Activated B cell treated with CpG ODN at 0.5 μM for 24 hours (primary cell): ENCODE measurements at regions of chr1 and their contacts with region 1.

Region 1: DNA sequence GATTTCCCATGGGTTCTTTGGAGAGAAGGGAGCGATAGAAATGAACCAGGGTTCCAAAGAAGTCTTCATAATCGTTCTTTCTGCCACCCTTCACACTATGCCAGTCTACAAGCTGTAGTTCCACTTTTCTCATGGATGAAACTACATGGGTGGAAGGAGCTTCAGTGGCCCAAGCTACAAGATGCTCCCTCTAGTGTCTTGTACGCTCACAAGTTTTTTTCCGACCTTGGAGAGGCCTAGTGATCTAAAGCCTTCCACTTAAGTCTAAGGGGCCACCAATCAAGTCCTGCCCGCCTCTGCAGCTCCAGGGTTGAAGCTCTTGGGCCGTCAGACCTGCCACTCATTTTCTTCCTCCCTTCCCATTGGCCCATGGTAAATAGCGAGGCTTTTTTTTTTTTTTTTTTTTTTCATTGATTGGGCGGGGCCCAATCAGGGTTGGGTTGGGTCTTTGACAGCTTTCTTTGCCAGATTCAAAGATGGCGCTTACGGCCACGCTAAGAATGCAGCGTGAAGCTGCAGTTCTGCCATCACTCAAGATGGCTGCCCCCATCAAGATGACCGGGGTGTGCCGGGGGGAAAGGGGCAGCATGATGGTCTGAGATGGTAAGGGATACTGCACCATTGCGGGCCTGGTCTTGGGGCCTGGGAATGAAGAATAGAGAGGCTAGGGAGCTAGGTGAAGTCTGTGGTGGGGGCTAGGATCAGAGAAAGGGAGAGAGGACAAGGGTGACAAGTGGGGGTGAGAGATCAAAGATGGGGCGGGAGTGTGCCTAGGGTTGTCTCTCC is at the start of gene TOMM40L:
- DNase-seq: peak; percentile 65
- ATAC-seq: peak; percentile 95
- H3K4me3 Mint-ChIP-seq: peak within 1 kb of the TSS; percentile 99
- H3K27ac Mint-ChIP-seq: peak within 1 kb of the TSS; percentile 93
- H3K4me1 Mint-ChIP-seq: peaks cover 29% of the 10 kb centered on the region
- H3K27me3 Mint-ChIP-seq: peaks cover 25% of the 10 kb centered on the region
- CTCF ChIP-seq: no peak
- total RNA-seq, gene TOMM40L: 11.7 and 12.4 TPM in 2 replicates

Region 2: DNA sequence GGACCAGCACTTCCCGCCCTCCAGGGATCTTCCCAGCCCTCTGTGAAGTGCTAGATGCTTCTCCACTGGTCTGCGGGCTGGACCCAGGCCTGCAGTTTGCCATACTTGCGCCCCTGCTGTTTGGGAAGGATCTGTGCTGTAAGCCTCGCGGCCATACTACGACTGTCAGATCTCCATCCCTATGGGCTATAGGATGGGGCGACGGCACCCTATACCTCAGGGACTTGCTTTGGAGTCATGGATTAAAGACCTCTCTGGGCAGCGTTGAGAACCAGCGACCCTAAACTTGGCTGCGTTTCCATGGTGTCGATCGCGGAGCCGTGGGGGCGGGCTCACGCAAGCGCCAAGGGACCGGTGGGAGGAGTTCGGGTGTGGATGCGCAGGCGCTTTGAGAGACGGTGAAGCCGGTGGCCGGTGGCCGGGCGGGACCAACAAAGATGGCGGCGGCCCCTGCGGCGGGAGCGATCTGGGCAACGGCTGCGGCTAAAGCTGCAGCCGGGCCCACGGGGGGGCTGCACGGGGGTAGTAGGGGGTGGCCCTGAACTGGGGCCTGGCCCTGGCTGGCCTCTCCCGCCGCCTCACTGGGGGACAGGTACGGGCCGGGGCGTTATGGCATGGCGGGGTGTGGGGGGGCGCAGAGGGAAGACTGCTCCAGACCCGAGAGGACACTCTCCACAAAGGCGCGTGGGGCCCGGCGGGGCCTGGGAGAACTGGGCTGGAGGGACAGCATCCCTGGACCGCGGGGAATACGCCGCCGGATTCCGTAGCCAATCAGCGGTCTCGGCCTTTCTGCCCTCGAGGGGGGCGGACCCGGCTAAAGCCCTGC is 66.4 kb before region 1 on chr1 and contains the start of gene USP21:
- CTCF ChIA-PET with region 1: interaction called, 3 read pairs
- POLR2A ChIA-PET with region 1: interaction called, 6 read pairs
- intact Hi-C with region 1: loop called (anchors 1 kb)
- DNase-seq: peak; percentile 93
- ATAC-seq: peak; percentile 95
- H3K4me3 Mint-ChIP-seq: peak within 1 kb of the TSS; percentile 93
- H3K27ac Mint-ChIP-seq: peak within 1 kb of the TSS; percentile 91
- H3K4me1 Mint-ChIP-seq: peaks cover 48% of the 10 kb centered on the region
- H3K27me3 Mint-ChIP-seq: no peaks in the 10 kb centered on the region
- CTCF ChIP-seq: no peak
- total RNA-seq, gene USP21: 31.9 and 38.1 TPM in 2 replicates

Region 3: DNA sequence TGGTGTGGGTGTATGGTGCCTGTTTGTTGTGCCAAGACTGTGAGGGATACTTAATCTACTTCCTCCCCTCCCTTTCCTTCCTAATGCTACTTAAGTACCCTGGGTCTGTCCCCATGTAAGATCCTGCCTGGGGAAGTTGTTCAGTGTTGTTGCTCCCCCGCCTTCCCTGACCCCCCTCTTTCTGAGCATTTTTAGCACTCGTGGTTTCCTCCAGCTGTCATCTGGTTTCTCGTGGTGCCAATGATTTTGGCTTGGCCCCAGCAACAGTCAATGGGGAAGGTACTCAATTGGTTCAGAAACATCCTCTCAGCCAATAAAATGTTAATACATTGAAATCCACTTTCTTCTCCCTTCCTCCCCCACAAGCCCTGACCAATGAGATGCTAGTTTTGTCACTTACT is 40.4 kb before region 1 on chr1:
- CTCF ChIA-PET with region 1: interaction called, 22 read pairs
- POLR2A ChIA-PET with region 1: interaction called, 18 read pairs
- intact Hi-C with region 1: loop called (anchors 2 kb)
- DNase-seq: peak; percentile 41
- ATAC-seq: peak; percentile 66
- H3K4me3 Mint-ChIP-seq: peak overlapping the region; percentile 77
- H3K27ac Mint-ChIP-seq: peak overlapping the region; percentile 93
- H3K4me1 Mint-ChIP-seq: peaks cover 85% of the 10 kb centered on the region
- H3K27me3 Mint-ChIP-seq: no peaks in the 10 kb centered on the region
- CTCF ChIP-seq: no peak

Region 4: DNA sequence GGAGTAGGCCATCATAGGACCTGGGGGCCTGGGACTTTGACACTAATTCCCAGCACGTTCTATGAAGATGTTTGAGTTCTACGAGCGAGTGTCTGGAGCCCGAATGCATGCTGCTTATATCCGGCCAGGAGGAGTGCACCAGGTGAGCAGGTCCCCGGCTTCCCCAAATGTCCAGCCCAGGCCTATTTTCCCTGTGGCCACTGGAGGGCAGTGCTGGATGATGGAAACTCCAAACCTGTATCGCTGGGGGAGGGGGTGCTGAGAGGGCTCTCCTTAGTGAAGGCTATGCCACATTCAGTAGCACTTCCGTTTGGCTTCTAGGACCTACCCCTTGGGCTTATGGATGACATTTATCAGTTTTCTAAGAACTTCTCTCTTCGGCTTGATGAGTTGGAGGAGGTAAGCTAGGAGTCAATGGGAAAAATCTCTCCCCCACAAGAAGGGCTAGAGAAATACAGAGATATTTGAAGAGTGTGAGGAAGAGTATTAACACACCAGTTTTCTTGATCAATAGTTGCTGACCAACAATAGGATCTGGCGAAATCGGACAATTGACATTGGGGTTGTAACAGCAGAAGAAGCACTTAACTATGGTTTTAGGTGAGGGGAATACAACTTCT is 15.8 kb before region 1 on chr1:
- CTCF ChIA-PET with region 1: interaction called, 27 read pairs
- POLR2A ChIA-PET with region 1: interaction called, 4 read pairs
- intact Hi-C with region 1: loop called (anchors 1 kb)
- DNase-seq: peak; percentile 52
- ATAC-seq: peak; percentile 97
- H3K4me3 Mint-ChIP-seq: no peak overlapping the region
- H3K27ac Mint-ChIP-seq: no peak overlapping the region
- H3K4me1 Mint-ChIP-seq: peaks cover 9% of the 10 kb centered on the region
- H3K27me3 Mint-ChIP-seq: no peaks in the 10 kb centered on the region
- CTCF ChIP-seq: no peak

Region 5: GRCh38 chr1:161314201-161314981 is 88.7 kb after region 1 on chr1 and contains the start of gene SDHC:
- CTCF ChIA-PET with region 1: interaction called, 7 read pairs
- POLR2A ChIA-PET with region 1: interaction called, 10 read pairs
- intact Hi-C with region 1: loop called (anchors 1 kb)
- DNase-seq: peak; percentile 83
- ATAC-seq: peak; percentile 97
- H3K4me3 Mint-ChIP-seq: peak within 1 kb of the TSS; percentile 98
- H3K27ac Mint-ChIP-seq: peak within 1 kb of the TSS; percentile 98
- H3K4me1 Mint-ChIP-seq: peaks cover 21% of the 10 kb centered on the region
- H3K27me3 Mint-ChIP-seq: no peaks in the 10 kb centered on the region
- CTCF ChIP-seq: no peak
- total RNA-seq, gene SDHC: 160 and 179 TPM in 2 replicates

Region 6: DNA sequence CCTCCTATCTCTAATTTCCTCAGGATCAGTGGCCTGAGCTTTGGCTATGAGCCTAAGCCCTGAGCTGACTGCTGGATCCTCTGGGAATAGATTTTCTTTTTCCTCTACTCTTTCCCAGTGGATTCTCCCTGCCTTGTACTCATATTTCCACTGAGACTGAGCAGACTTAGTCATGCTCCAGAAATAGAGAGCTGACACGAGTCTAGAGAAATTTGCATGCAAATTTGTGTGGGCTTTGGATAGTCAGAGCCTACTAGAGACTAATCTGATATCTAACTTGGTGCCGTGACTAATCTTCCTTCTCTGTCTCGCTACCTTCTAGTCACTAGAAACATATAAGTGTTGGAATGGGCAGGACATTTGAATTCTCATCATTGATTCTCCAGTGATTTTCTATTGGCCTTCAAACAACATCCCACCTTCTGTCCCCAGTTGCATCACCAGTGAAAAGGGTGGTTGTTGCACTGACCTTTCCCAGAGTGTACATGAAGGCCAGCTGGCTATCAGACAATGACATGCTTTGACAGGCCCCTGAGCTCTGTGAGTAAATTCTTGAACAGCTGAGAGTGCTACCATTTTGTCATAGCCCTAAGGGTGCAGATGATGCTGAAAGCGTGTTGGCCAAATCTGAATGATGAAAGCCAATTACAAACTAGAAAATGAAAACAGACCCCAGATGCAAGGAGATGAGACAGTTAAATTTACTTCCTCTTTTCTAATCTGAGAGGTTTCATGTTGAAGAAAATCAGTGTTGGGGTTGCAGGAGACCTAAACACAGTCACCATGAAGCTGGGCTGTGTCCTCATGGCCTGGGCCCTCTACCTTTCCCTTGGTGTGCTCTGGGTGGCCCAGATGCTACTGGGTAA is 481.0 kb after region 1 on chr1 and contains the start of gene FCRLA:
- CTCF ChIA-PET with region 1: no interaction called
- POLR2A ChIA-PET with region 1: interaction called, 10 read pairs
- intact Hi-C with region 1: no loop called
- DNase-seq: no peak
- ATAC-seq: peak; percentile 53
- H3K4me3 Mint-ChIP-seq: no peak within 1 kb of the TSS
- H3K27ac Mint-ChIP-seq: no peak within 1 kb of the TSS
- H3K4me1 Mint-ChIP-seq: peaks cover 28% of the 10 kb centered on the region
- H3K27me3 Mint-ChIP-seq: no peaks in the 10 kb centered on the region
- CTCF ChIP-seq: no peak
- total RNA-seq, gene FCRLA: 175 and 178 TPM in 2 replicates